Activated CD8-positive, alpha-beta T cell treated with anti-CD3 and anti-CD28 coated beads for 36 hours (primary cell): ENCODE measurements at regions of chr6 and their contacts with region 1.

Region 1: GRCh38 chr6:83859410-83860358 is at the start of gene CYB5R4:
- DNase-seq: peak; percentile 95
- ATAC-seq: peak; percentile 99
- H3K4me3 Mint-ChIP-seq: peak within 1 kb of the TSS; percentile 88
- H3K27ac Mint-ChIP-seq: peak within 1 kb of the TSS; percentile 82
- H3K4me1 Mint-ChIP-seq: peaks cover 32% of the 10 kb centered on the region
- H3K27me3 Mint-ChIP-seq: peaks cover 11% of the 10 kb centered on the region
- CTCF ChIP-seq: peak; percentile 43
- total RNA-seq, gene CYB5R4: 26.9 to 27.0 TPM

Region 2: GRCh38 chr6:83884523-83884922 is 24.8 kb after region 1 on chr6:
- CTCF ChIA-PET with region 1: interaction called, 12 read pairs
- POLR2A ChIA-PET with region 1: no interaction called
- intact Hi-C with region 1: no loop called
- DNase-seq: no peak
- ATAC-seq: peak; percentile 86
- H3K4me3 Mint-ChIP-seq: no peak overlapping the region
- H3K27ac Mint-ChIP-seq: no peak overlapping the region
- H3K4me1 Mint-ChIP-seq: peaks cover 7% of the 10 kb centered on the region
- H3K27me3 Mint-ChIP-seq: no peaks in the 10 kb centered on the region
- CTCF ChIP-seq: peak; percentile 75

Region 3: GRCh38 chr6:84227434-84228197 is 367.9 kb after region 1 on chr6 and contains the start of gene CEP162:
- CTCF ChIA-PET with region 1: interaction called, 12 read pairs
- POLR2A ChIA-PET with region 1: no interaction called
- intact Hi-C with region 1: no loop called
- DNase-seq: peak; percentile 96
- ATAC-seq: peak; percentile 97
- H3K4me3 Mint-ChIP-seq: peak within 1 kb of the TSS; percentile 82
- H3K27ac Mint-ChIP-seq: peak within 1 kb of the TSS; percentile 93
- H3K4me1 Mint-ChIP-seq: peaks cover 16% of the 10 kb centered on the region
- H3K27me3 Mint-ChIP-seq: peaks cover 5% of the 10 kb centered on the region
- CTCF ChIP-seq: peak; percentile 67
- total RNA-seq, gene CEP162: 4.9 to 5.4 TPM

Region 4: DNA sequence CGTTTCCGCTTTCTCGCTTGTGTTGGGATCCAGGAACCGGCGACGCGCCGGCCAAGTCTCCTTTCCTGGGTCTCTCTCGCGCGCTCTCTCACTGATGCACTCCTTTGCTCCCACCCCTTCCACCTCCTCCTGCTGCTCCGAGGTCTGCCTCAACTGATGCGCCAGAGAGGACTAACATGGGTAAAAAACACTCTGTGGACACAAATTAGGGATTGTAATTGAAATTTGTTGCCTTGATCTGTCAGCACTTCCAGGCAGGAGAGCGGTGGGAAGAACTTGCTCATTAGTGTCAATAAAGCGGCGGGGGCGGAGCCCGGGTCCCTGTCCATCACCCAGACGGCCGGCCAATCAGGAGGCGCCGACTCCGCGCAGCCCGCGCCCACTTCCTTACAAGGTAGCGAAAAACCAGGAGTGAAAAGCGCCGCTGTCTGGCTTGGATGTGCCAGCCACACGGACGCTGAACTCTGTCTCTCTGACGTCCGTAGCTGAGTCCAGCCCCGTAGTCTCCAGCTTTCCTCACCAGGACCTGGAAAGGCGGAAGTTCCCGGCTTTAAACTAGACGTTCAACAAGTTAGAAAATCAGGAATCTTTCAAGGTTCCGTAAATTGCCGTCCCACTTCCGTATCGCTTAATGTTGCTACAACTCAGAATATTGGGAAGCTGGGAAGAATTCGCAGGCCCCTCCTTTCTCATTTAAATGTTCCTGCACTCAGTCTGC is 904.8 kb after region 1 on chr6 and contains the start of gene TBX18:
- CTCF ChIA-PET with region 1: no interaction called
- POLR2A ChIA-PET with region 1: no interaction called
- intact Hi-C with region 1: loop called (anchors 10 kb)
- DNase-seq: peak; percentile 54
- ATAC-seq: peak; percentile 49
- H3K4me3 Mint-ChIP-seq: peak within 1 kb of the TSS; percentile 52
- H3K27ac Mint-ChIP-seq: no peak within 1 kb of the TSS
- H3K4me1 Mint-ChIP-seq: peaks cover 6% of the 10 kb centered on the region
- H3K27me3 Mint-ChIP-seq: peaks cover 64% of the 10 kb centered on the region
- CTCF ChIP-seq: no peak
- total RNA-seq, gene TBX18: not detected